HEK293T (cell line): ENCODE measurements at regions of chr15 and their contacts with region 1.

Region 1: DNA sequence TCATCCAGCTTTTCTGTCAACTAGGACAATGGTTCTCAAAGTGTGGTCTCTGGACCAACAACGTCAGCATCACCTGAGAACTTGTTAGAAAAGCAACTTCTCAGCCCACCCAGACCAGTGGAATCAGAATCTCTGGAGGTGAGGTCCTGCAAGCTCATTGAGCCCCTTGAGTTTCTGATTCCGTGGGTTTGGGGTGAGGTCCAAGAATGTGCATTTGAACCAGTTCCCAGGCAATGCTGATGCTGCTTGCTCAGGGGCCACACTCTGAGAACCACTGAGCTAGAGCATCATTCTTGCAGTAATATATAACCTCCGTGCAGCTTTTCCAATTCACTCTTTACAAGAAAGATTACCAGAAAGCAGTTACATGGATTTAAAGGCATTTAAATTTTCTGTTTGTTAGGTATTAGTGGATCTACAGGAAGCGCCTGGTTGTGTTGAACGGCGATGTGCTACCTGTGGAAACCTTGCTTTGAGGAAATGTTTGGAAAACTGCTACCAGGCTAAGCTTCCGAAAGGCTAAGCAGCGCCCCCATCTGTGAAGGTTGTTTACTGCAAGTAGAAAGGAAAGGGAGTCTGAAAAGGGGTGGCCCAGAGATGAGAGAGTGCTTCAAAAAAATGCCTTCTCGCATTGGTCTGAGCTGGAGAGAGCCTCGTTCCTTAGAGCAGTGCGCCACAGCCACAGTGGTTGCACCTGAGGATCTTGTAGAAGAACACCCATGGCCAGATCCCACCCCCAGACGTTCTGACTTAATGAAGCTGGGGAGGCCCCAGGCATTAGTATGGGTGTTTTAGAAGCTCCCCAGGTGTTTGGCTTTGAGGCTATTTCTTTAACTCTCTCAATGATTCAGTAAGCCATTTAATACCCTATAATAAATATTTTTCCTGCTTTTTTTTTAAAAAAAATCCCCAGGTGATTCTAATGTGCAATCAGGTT is 50.0 kb downstream of the RLBP1 start:
- DNase-seq: peak; percentile 79

Region 2: DNA sequence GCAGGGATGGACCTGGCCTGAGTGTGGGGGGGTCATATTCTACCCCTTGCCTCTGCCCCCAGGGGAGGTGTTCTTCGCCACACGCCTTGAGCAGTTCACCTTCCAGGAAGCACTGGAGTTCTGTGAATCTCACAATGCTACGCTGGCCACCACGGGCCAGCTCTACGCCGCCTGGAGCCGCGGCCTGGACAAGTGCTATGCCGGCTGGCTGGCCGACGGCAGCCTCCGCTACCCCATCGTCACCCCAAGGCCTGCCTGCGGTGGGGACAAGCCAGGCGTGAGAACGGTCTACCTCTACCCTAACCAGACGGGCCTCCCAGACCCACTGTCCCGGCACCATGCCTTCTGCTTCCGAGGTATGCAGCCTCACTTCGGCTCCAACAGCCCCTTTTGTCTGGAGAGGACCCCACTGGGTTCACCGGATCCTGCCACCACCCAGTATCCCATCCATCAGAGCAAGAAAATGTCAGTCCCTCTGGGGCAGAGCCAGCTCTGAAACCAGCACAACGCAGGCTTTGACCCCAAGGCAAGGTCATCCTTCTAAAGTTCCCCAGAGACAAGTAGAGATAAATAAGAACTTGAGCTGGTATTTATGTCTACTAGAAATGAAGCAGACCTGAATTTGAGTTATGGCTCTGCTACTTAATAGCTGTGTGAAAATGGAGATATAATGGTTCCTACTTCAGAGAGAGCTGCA is 321.9 kb before region 1 on chr15:
- CTCF ChIA-PET with region 1: no interaction called
- POLR2A ChIA-PET with region 1: no interaction called
- DNase-seq: no peak

Region 3: GRCh38 chr15:89087830-89088604 is 83.4 kb before region 1 on chr15 and contains the start of gene ABHD2:
- CTCF ChIA-PET with region 1: interaction called, 14 read pairs
- POLR2A ChIA-PET with region 1: interaction called, 4 read pairs
- DNase-seq: peak; percentile 98

Region 4: GRCh38 chr15:89129123-89129815 is 42.1 kb before region 1 on chr15:
- CTCF ChIA-PET with region 1: interaction called, 12 read pairs
- POLR2A ChIA-PET with region 1: no interaction called
- DNase-seq: peak; percentile 63

Region 5: DNA sequence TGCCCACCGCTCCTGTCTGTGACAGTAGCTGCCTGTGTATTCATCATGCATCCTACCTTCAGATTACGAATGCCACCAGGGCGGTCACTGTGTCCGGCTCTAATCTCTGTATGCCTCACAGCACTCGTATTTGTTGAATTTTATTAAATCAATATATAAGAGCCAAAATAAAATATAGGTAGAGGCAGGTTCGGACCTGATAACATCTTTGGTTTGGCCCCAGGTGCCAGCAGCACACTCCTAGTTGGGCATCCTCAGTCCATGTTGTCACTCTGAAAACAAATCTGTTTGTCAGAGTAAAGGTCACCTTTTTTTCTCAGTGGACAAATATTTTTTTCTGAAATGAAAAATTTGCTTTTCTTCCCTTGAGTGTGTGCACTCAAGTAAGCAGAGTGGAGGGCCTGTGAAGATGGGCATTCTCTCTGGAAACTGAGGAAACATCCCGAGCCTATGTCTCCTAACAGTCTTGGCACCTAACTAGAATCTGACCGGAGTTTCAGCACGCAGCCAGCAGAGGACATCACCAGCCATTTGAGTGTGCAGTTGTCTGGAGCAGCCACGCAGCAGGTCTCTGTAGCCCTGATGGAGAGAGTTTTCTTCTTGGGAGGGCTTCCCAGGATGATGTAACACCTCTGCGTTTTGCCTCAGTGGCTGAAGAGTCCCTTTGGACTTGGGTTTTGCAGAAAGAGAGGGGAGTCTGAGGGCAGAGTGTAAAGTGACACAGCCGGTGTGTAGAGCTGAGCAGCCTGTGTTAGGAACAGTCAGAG is 31.8 kb before region 1 on chr15:
- CTCF ChIA-PET with region 1: interaction called, 19 read pairs
- POLR2A ChIA-PET with region 1: interaction called, 6 read pairs
- DNase-seq: peak; percentile 61

Region 6: DNA sequence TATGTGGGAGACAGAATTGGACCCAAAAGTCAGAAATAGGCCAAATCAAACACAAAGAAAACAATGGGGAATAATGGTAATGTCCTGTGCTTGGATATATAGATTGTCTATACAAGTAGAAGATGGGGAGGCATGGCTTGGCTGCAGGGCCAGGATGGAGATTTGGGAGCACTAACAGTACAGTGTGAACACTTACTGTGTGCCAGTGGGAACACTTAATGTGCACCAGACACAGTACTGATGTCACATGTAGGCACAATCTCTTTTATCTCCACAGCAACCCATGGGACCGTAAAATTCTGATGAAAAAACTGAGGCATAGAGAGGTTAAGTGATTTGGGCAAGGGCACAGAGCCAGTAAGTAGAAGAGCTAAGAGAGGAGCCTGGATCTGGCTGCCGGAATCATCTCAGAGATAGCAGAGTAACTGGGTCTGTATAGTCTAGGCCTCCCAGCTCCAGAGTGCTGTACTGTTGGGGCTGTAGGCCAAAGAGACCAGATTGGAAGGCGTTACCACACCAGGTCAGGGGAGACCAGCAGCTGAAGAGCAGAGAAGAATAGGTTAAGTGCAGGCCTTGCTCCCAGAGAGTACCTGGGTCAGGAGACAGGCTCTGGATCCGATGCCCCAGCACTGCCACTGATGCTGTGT is 13.4 kb before region 1 on chr15:
- CTCF ChIA-PET with region 1: interaction called, 15 read pairs
- POLR2A ChIA-PET with region 1: no interaction called
- DNase-seq: no peak

Region 7: DNA sequence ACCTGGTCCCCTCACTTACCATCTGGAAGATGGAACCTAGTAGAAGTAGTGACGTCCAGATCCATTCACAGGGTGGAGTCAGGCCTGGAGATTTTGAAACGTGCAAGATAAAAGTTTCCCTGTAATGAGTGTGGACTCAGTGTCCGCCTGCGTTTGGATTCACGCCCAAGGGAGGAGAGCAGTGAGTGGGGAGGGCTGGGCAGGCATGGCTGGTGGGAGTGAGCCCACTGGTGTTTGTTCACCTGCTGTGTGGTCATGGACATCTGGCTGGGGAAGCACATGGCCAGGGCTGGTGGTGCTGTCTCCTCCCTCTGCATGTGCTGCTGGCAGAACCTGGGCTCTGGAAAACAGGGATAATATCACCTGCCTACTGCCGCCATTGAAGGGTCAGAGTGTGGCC is 13.0 kb after region 1 on chr15:
- CTCF ChIA-PET with region 1: interaction called, 15 read pairs
- POLR2A ChIA-PET with region 1: no interaction called
- DNase-seq: no peak